PC-9 (cell line): ENCODE measurements at regions of chr3 and their contacts with region 1.

Region 1: DNA sequence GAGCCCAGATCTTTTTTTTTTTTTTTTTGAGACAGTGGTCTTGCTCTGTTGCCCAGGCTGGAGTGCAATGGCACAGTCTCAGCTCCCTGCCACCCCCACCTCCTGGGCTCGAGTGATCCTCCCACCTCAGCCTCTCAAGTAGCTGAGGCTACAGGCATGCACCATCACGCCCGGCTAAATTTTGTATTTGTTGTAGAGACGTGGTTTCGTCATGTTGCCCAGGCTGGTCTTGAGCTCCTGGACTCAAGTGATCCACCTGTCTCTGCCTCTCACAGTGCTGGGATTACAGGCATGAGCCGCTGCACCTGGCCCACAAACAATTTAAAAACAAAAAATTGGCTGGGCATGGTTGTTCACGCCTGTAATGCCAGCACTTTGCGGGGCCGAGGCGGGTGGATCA is 22.6 kb upstream of the SLC6A6 start:
- DNase-seq: no peak
- H3K4me3 ChIP-seq: no peak overlapping the region
- H3K27ac ChIP-seq: no peak overlapping the region
- H3K4me1 ChIP-seq: peaks cover 30% of the 10 kb centered on the region
- H3K27me3 ChIP-seq: no peaks in the 10 kb centered on the region
- CTCF ChIP-seq: no peak

Region 2: DNA sequence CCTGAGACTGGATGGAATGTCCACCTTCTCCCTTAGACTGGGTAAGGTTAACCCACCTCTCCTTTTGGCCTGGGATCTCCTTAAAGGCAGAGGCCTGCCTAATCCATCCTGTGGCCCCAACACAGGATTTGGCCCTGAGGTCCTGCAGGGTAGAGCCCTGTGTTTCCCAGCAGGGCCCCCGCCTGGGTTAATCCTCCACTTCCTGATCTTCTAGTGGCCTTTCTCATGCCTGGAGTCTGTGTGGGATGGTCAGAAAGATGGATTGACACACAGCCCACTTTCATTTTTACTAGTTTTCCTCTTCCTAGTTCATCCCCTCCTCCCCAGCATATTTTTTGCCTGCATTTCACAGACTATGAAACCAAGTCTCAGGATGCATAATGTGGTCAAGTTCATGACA is 26.3 kb before region 1 on chr3:
- CTCF ChIA-PET with region 1: interaction called, 11 read pairs
- POLR2A ChIA-PET with region 1: interaction called, 4 read pairs
- intact Hi-C with region 1: no loop called
- DNase-seq: no peak
- H3K4me3 ChIP-seq: no peak overlapping the region
- H3K27ac ChIP-seq: no peak overlapping the region
- H3K4me1 ChIP-seq: no peaks in the 10 kb centered on the region
- H3K27me3 ChIP-seq: no peaks in the 10 kb centered on the region
- CTCF ChIP-seq: no peak